Prostate gland (tissue), 2 donors: ENCODE measurements at regions of chr2 and their contacts with region 1.

Region 1: DNA sequence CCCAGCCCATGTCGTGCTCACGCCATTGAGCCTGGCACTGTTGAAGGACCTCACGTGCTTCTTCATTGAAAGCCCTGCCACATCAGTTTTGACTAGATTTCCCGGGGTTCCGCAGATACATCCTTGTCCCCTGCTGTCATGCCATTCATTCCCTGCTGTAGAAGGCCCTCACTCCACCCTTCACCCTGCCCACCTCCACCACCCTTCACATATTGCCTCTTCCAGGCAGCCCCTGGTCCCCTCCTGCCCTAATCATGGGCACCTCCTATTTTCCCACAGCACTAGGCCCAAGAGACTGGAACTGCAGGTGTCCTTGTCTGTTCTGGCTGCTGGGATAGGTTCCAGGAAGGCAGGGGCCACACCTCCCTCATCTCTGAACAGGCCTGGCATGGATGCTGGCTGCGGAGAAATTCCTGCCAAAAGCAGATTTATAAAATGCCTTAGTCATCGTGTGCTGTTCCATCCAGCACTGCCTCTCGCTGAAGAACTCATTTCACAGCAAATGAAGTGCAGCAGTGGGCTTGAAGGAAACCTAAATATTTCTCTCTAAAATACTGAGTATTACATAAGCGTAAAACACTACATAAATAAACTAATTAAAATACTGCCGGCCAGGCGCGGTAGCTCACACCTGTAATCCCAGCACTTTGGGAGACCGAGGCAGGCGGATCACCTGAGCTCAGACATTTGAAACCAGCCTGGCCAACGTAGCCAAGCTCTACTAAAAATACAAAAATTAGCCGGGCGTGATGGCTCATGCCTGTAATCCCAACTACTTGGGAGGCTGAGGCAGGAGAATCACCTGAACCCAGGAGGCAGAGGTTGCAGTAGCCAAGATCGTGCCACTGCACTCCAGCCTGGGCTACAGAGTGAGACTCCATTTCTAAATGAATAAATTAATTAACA is 38.4 kb downstream of the EIF4E2 start:
- DNase-seq: peak; percentile 93
- H3K4me3 ChIP-seq: no peak overlapping the region
- H3K27ac ChIP-seq: peak overlapping the region; percentile 43 to 57
- H3K4me1 ChIP-seq: no peaks in the 10 kb centered on the region
- H3K27me3 ChIP-seq: no peaks in the 10 kb centered on the region
- CTCF ChIP-seq: no peak
- POLR2A ChIP-seq: no peak

Region 2: DNA sequence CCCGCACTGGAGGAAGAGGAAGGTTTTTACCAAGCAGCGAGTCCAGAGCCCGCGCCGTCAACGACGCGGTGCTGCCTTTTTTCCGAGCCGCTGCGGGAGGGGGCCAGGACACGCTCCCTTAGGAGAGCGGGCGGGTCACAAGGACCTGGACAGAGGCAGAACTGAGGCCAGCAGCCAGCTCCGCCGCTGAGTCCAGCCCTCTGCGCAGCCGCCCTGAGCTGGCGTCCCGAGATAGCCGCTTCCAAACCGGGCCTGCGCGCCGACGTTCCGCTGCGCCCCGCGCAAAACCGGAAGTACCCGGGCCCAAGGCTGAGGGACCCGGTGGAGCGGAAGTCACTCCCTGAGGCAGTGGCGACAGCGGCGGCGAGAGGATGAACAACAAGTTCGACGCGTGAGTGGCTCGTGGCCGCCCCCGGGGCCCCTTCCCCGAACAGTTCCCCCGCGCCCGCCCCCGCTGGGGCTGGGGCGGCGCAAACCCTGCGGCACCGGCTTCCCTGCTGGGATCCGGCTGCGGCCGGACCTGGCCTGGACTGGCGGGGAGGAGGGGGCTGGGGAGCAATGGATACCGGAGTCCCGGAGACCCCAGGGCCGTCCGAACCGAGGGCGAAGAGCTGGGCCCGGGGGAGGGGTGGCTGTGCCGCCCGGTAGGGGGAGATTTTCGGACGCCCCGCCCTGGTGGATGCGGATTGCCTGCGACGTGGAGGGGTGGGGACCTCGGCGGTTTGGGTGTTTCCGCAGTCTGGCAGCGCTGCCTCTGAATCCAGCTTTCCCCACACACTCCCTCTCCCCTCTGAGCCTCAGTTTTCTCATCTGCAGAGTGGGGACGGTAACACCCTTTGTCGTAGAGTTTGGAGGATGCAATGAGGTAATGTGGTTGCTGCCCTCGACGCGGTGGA is 38.3 kb before region 1 on chr2 and contains the starts of genes EIF4E2 and TIGD1:
- intact Hi-C with region 1: loop called (anchors 5 kb)
- DNase-seq: peak; percentile 91
- H3K4me3 ChIP-seq: peak within 1 kb of the TSS; percentile 92 to 97
- H3K27ac ChIP-seq: peak within 1 kb of the TSS; percentile 96 to 97
- H3K4me1 ChIP-seq: peaks cover 3% of the 10 kb centered on the region
- H3K27me3 ChIP-seq: no peaks in the 10 kb centered on the region
- CTCF ChIP-seq: peak in 3 of 4 experiments; percentile 29 to 53 (median 50)
- POLR2A ChIP-seq: peak; percentile 87
- total RNA-seq, gene EIF4E2: 39.2 to 40.6 TPM
- total RNA-seq, gene TIGD1: 2.6 to 4.9 TPM